BJ (cell line): ENCODE measurements at regions of chr2 and their contacts with region 1.

Region 1: GRCh38 chr2:237558906-237559641 is 7.3 kb upstream of the PRLH start:
- DNase-seq: peak; percentile 74
- H3K4me3 ChIP-seq: no peak overlapping the region
- H3K27me3 ChIP-seq: no peaks in the 10 kb centered on the region; the same call in 1 of the 2 replicates
- CTCF ChIP-seq: peak; percentile 32

Region 2: GRCh38 chr2:236607451-236608187 is 951.5 kb before region 1 on chr2:
- CTCF ChIA-PET with region 1: no interaction called
- POLR2A ChIA-PET with region 1: interaction called, 11 read pairs
- DNase-seq: peak; percentile 51
- H3K4me3 ChIP-seq: no peak overlapping the region
- H3K27me3 ChIP-seq: peaks cover 3% of the 10 kb centered on the region
- CTCF ChIP-seq: peak; percentile 17; the same call in 1 of the 2 replicates

Region 3: GRCh38 chr2:237944302-237944701 is 385.2 kb after region 1 on chr2:
- CTCF ChIA-PET with region 1: no interaction called
- POLR2A ChIA-PET with region 1: no interaction called
- DNase-seq: no peak
- H3K4me3 ChIP-seq: no peak overlapping the region
- H3K27me3 ChIP-seq: 0 out of 2 replicates have a peak, but pooled peaks cover 4% of the 10 kb centered on the region
- CTCF ChIP-seq: no peak